ENCODE measurements at regions of chr6 and their contacts with region 1.

Region 1: GRCh38 chr6:43013843-43014433 is at the starts of genes KLHDC3 and MEA1:
- DNase-seq: peak; percentile 99
- ATAC-seq: peak; percentile 96
- H3K4me3 Mint-ChIP-seq: peak within 1 kb of the TSS; percentile 91
- H3K27ac Mint-ChIP-seq: peak within 1 kb of the TSS; percentile 87
- H3K4me1 Mint-ChIP-seq: peaks cover 39% of the 10 kb centered on the region
- H3K27me3 Mint-ChIP-seq: no peaks in the 10 kb centered on the region
- total RNA-seq, gene KLHDC3: 58.3 to 65.2 TPM
- total RNA-seq, gene MEA1: 93.4 to 129 TPM

Region 2: DNA sequence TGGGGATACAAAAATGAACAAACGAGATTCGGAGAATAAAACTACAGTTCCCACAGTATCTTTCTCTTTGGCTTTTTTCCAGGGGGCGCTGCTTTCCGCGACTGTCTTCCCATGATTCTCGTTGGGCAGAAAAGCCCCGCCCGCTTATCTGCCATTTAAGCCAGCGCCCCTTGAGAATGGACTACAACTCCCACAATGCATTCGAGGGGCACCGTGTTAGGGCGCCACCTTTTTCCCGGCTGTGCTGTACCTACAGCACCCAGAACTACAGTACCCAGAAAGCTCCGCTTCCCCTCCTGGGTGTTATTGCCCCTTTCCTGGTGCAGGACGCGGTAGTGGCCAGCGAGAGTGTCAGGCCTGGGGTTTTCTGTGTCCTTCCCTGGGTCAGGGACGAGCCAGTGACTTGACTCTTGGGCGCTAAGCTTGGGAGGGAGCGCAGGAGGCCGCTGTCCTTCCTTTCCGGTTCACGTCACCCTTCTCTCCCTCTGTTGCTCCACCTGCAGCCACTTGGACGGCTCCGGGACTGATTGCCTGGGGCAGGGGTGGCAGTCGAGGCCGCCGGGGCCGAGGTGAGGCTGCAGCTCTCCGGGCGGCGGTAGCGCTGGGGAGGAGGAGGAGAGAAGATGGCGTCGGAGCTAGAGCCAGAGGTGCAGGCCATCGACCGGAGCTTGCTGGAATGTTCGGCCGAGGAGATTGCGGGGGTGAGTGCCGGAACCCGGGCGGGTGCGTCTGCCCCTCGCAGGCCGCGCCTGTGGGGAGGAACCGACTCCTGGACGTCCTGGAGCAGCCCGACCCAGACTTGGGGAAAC is 450.0 kb before region 1 on chr6 and contains the start of gene UBR2:
- CTCF ChIA-PET with region 1: no interaction called
- POLR2A ChIA-PET with region 1: no interaction called
- intact Hi-C with region 1: loop called in 1 of 2 experiments (anchors 1 kb)
- DNase-seq: peak; percentile 97
- ATAC-seq: peak; percentile 97
- H3K4me3 Mint-ChIP-seq: peak within 1 kb of the TSS; percentile 97
- H3K27ac Mint-ChIP-seq: peak within 1 kb of the TSS; percentile 95
- H3K4me1 Mint-ChIP-seq: peaks cover 31% of the 10 kb centered on the region
- H3K27me3 Mint-ChIP-seq: no peaks in the 10 kb centered on the region
- total RNA-seq, gene UBR2: 23.9 to 28.1 TPM

Region 3: DNA sequence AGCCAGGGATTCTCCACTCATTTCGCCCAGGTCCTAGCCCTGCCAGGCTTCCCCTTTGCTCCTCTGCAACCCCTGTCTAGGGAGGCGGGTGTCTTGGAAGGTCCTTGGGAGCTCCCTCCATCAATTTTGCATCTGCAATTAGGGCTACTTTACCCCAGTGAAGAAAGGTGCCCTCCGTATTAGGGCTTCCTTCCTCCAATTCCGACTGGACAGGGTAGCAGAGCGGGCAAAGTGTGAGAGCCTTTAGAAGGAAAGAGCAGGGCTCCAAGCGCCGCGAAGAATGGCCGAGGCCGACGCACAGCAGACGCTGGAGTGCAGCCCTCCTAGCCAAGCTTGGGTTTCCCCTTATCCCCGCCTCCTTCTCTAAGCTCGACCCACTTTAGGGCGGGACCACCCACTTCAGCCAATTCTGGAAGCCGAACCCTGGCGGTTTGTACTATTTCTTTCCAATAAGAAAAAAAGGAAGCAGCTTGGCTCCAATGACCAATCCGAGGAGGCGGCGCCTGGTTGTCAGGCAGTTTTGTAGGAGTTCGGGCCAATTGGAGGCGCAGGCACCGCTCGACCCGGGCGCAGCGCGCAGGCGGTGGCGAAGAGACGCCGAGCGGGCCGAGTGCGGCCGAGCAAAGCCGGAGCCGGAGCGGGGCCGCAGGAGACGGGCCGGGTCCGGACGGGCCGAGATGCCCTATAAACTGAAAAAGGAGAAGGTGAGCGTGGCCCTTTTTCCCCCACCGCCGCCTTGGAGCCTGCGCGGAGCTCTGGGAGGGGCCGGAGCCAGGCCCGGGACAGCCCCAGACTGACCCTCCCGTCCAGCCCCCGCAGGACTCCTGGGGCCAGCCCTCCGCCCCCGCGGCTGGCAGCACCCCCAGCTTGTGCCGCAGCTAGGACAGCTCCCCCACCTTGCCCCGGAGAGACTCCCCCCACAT is 29.7 kb before region 1 on chr6 and contains the start of gene PPP2R5D:
- CTCF ChIA-PET with region 1: interaction called, 5 read pairs
- POLR2A ChIA-PET with region 1: interaction called, 10 read pairs
- intact Hi-C with region 1: loop called (anchors 1 kb)
- DNase-seq: peak; percentile 98
- ATAC-seq: peak; percentile 92
- H3K4me3 Mint-ChIP-seq: peak within 1 kb of the TSS; percentile 79
- H3K27ac Mint-ChIP-seq: peak within 1 kb of the TSS; percentile 82
- H3K4me1 Mint-ChIP-seq: peaks cover 52% of the 10 kb centered on the region
- H3K27me3 Mint-ChIP-seq: no peaks in the 10 kb centered on the region
- total RNA-seq, gene PPP2R5D: 51.0 to 57.3 TPM

Region 4: DNA sequence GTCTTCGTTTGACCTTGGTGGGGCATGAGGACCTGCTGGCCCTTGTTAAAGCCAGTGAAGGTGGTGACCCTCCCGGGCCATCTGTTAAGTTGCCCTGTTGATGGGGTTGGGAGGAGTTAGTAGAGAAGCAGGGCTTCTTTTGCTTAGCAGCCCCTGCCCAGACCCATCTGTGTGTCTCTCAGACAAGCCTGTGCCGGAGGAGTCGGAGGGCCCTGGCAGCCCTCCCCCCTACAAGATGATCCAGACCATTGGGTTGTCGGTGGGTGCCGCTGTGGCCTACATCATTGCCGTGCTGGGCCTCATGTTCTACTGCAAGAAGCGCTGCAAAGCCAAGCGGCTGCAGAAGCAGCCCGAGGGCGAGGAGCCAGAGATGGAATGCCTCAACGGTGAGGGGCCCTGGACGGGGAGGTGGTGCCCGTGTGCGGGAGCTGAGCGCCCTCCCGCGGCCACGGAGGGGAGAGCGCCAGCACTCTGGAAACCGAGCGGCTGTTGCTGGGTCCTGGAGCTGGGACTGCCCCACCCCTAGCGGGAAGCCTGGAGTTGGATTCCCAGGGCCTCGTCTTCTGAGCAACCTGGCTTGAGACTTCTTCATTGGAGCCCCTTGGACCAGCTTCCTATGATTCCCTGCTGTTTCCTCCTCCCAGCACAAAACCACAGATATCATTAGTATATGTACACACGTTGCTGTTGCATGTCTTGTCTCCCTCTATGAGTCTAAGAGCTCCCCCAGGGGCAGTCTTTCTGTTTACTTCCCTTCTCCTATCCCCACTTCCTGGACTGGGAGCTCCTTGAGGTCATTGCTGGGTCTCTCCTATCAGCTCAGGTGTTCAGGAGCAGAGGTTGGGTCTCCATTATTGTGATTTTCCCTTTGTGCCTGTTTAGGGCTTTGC is 129.5 kb after region 1 on chr6:
- CTCF ChIA-PET with region 1: interaction called, 32 read pairs
- POLR2A ChIA-PET with region 1: no interaction called
- intact Hi-C with region 1: loop called in 1 of 2 experiments (anchors 1 kb)
- DNase-seq: peak; percentile 90
- ATAC-seq: peak; percentile 99
- H3K4me3 Mint-ChIP-seq: no peak overlapping the region
- H3K27ac Mint-ChIP-seq: no peak overlapping the region
- H3K4me1 Mint-ChIP-seq: peaks cover 5% of the 10 kb centered on the region
- H3K27me3 Mint-ChIP-seq: no peaks in the 10 kb centered on the region

Region 5: DNA sequence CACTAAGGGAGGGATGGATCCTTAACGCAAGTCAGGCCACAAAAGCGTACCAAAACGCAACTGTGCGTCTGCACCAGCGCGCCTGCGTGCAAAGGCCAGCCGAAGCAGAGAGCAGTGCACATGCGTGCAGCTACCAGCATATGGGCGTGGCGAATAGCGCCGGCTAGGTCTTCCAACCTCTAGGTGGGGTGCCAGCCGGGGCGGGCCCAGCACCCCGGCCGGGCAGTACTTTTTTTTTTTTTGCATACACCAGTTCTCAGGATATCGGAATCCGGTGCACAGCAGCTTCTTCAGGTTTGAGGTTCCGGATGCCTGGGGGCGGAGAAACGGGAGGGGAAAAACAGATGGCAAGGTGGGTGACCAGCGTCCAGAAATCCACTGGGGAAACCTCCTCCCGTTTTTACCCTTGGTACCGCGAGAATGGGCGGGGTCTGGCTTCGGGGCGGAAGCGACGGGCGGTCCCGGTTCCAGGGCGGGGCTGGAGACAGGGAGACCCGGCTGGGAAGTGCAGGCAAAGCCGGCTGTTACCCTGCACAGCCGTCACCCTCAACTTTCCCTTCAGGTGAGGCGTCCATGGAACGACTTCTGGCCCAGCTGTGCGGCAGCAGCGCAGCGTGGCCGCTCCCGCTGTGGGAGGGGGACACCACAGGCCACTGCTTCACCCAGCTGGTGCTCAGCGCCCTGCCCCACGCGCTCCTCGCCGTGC is 413.6 kb after region 1 on chr6 and contains the start of gene ABCC10:
- CTCF ChIA-PET with region 1: no interaction called
- POLR2A ChIA-PET with region 1: interaction called, 3 read pairs
- intact Hi-C with region 1: loop called in 1 of 2 experiments (anchors 1 kb)
- DNase-seq: peak; percentile 97
- ATAC-seq: peak; percentile 97
- H3K4me3 Mint-ChIP-seq: peak within 1 kb of the TSS; percentile 94
- H3K27ac Mint-ChIP-seq: peak within 1 kb of the TSS; percentile 97
- H3K4me1 Mint-ChIP-seq: peaks cover 21% of the 10 kb centered on the region
- H3K27me3 Mint-ChIP-seq: no peaks in the 10 kb centered on the region
- total RNA-seq, gene ABCC10: 27.8 to 29.0 TPM

Region 6: DNA sequence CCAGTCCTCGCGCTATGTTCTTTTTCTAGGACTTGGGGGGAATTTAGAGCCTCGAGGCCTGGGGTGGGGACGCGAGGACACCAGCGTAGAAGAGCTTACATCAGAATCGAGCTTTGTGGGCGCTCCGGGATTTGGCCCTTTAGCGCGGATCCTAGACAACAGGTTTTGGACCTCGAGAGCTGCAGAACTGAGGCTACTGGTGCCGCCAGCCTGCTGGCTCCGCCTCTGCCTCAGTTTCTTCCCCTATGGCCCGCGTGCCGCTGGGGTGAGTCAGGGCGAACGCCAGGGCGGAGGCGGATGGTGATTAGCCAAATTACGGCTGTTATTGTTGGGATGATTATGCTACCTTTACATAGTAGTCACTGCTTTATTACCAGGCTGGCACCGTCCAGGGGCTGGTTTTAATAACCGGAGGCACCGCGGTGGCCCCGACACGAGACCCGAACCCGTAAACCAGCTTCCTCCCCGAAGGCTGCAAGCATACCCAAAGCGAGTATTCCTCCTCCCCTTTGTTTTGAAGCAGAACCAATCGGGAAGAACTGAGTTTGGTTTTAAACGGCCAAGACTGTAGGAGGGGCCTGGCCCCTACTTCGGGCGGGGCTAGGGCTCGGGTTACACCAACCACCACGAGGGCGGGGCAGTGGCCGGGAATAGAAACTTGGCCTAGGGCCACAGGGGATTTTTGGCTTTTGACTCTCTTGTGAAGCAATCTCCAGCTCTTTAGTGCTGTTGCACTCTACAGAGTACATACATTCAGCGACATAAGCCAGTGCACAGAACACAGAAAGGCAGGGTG is 615.8 kb after region 1 on chr6:
- CTCF ChIA-PET with region 1: no interaction called
- POLR2A ChIA-PET with region 1: no interaction called
- intact Hi-C with region 1: loop called in 1 of 2 experiments (anchors 5 kb)
- DNase-seq: peak; percentile 96
- ATAC-seq: peak; percentile 77
- H3K4me3 Mint-ChIP-seq: peak overlapping the region; percentile 88
- H3K27ac Mint-ChIP-seq: peak overlapping the region; percentile 100
- H3K4me1 Mint-ChIP-seq: peaks cover 33% of the 10 kb centered on the region
- H3K27me3 Mint-ChIP-seq: no peaks in the 10 kb centered on the region

Measured in activated CD4-positive, alpha-beta T cell treated with anti-CD3 and anti-CD28 coated beads for 36 hours (primary cell).